ENCODE measurements at regions of chr3 and their contacts with region 1.

Region 1: DNA sequence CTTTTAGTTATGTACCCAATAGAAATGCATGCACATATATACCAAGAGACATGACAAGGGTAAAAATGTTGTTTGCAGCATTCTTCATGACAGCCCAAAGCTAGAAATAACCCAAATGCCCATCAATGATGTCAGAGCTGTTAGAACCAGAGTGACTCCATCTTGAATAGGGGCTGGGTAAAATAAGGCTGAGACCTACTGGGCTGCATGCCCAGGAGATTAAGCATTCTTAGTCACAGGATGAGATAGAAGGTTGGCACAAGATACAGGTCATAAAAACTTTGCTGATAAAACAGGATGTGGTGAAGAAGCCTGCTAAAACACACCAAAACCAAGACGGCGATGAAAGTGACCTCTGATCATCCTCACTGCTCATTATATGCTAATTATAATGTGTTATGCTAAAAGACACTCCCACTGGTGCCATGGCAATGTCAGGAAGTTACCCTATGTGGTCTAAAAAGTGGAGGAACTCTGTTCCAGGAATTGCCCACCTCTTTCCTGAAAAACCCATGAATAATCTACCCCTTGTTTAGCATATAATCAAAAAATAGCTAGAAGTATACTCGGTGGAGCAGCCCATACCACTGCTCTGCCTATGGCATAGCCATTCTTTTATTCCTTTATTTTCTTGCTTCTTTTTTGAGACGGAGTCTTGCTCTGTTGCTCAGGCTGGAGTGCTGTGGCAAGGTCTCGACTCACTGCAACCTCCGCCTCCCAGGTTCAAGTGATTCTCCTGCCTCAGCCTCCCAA is 32.9 kb downstream of the ZBTB11 start:
- DNase-seq: peak in 7 of 9 experiments; percentile 19 to 81 (median 56)
- ATAC-seq: peak; percentile 80
- H3K4me3 ChIP-seq: no peak overlapping the region
- H3K4me3 Mint-ChIP-seq: peak overlapping the region; percentile 24
- H3K27ac ChIP-seq: peak overlapping the region; percentile 2 to 63
- H3K27ac Mint-ChIP-seq: peak overlapping the region; percentile 84
- H3K4me1 ChIP-seq: peaks cover 23% of the 10 kb centered on the region
- H3K4me1 Mint-ChIP-seq: peaks cover 26% of the 10 kb centered on the region
- H3K27me3 ChIP-seq: no peaks in the 10 kb centered on the region
- H3K27me3 Mint-ChIP-seq: no peaks in the 10 kb centered on the region
- CTCF ChIP-seq: no peak

Region 2: GRCh38 chr3:101656651-101657050 is 12.6 kb after region 1 on chr3:
- CTCF ChIA-PET with region 1: no interaction called
- POLR2A ChIA-PET with region 1: no interaction called
- intact Hi-C with region 1: no loop called
- DNase-seq: no peak
- ATAC-seq: no peak
- H3K4me3 ChIP-seq: no peak overlapping the region
- H3K4me3 Mint-ChIP-seq: no peak overlapping the region
- H3K27ac ChIP-seq: no peak overlapping the region
- H3K27ac Mint-ChIP-seq: no peak overlapping the region
- H3K4me1 ChIP-seq: no peaks in the 10 kb centered on the region
- H3K4me1 Mint-ChIP-seq: no peaks in the 10 kb centered on the region
- H3K27me3 ChIP-seq: no peaks in the 10 kb centered on the region
- H3K27me3 Mint-ChIP-seq: no peaks in the 10 kb centered on the region
- CTCF ChIP-seq: no peak

Region 3: DNA sequence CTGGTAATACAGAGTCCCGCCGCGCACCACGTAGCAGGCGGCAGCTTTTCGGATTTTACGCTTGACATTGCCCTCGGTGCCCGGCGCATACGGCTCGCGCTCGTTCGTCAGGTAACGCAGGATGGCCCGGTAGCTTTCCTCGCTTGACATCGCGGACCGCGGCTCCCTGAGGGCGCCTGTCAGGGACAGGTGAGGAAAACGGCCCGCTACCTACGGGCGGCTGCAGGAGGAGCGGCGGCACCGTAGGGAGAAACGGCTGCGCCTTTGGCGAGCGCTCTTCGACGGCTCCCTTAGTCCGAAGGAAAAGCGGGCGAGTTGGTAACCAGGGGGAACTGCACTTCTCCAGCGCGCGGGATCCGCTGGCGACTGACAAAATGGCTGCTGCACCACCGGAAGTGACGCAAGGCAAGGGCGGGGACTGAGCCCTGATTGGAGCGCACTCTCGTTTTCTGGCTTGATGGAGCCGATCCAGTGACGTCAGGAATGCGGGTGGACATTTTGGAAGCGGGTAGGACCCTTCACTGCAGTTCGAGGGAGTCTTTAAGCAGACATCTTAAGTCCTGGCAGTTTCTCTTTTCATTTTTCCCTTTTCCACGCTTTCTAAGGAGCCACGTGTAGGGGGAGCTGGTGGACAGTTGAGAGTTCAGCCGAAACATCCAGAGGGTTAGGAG is 32.9 kb after region 1 on chr3 and contains the start of gene ZBTB11:
- CTCF ChIA-PET with region 1: interaction called, 3 read pairs
- POLR2A ChIA-PET with region 1: no interaction called
- intact Hi-C with region 1: loop called in 1 of 2 experiments (anchors 1 kb)
- DNase-seq: peak; percentile 99 to 100 (median 100)
- ATAC-seq: peak; percentile 63
- H3K4me3 ChIP-seq: peak within 1 kb of the TSS; percentile 90 to 100
- H3K4me3 Mint-ChIP-seq: peak within 1 kb of the TSS; percentile 95
- H3K27ac ChIP-seq: peak within 1 kb of the TSS; percentile 97 to 99
- H3K27ac Mint-ChIP-seq: peak within 1 kb of the TSS; percentile 98
- H3K4me1 ChIP-seq: peaks cover 26% of the 10 kb centered on the region
- H3K4me1 Mint-ChIP-seq: peaks cover 49% of the 10 kb centered on the region
- H3K27me3 ChIP-seq: no peaks in the 10 kb centered on the region
- H3K27me3 Mint-ChIP-seq: no peaks in the 10 kb centered on the region
- CTCF ChIP-seq: no peak
- total RNA-seq, gene ZBTB11: 69.6 to 75.2 TPM

Measured in CD8-positive, alpha-beta T cell (primary cell).